ENCODE measurements at regions of chr9 and their contacts with region 1.

Region 1: DNA sequence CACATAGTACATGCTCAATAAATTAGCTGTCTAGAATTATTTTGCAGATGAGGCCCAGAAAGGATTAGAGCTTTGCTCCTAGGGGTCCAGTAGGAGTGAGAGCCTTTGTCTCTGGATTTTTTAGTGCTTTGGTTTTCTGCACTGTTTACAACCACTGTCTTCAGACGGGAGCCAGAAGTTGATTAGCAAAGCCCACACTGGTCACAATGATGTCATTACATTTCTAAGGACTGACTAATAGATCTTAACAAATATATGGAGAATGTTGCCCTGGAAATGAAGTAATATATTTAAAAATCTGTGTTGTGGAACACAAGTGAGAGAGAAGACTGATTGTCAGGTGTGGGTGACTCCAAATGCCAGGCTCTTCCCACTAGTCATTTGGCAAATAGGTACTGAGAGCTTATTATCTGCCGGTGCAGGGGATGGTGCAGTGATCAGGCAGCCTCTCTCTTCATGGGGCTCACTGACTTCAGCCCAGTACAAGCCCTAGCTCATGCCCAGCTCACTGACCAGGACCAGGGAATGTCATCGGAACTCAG is 76.2 kb downstream of the COL15A1 start:
- DNase-seq: peak in 1 of 2 donors; percentile 41
- H3K4me3 ChIP-seq: no peak overlapping the region
- H3K27ac ChIP-seq: peak overlapping the region; percentile 32 to 79 (median 77)
- H3K4me1 ChIP-seq: peaks cover 0 to 17% (median 6%) of the 10 kb centered on the region in 4 donors
- H3K27me3 ChIP-seq: no peaks in the 10 kb centered on the region
- CTCF ChIP-seq: no peak
- EP300 ChIP-seq: no peak
- POLR2A ChIP-seq: no peak

Region 2: GRCh38 chr9:98887918-98888510 is 131.8 kb before region 1 on chr9:
- intact Hi-C with region 1: no loop called
- DNase-seq: no peak
- H3K4me3 ChIP-seq: no peak overlapping the region
- H3K27ac ChIP-seq: peak overlapping the region in 1 of 5 donors; percentile 8
- H3K4me1 ChIP-seq: peaks cover 0 to 8% (median 2%) of the 10 kb centered on the region in 4 donors
- H3K27me3 ChIP-seq: no peaks in the 10 kb centered on the region
- CTCF ChIP-seq: no peak
- EP300 ChIP-seq: no peak
- POLR2A ChIP-seq: no peak

Region 3: DNA sequence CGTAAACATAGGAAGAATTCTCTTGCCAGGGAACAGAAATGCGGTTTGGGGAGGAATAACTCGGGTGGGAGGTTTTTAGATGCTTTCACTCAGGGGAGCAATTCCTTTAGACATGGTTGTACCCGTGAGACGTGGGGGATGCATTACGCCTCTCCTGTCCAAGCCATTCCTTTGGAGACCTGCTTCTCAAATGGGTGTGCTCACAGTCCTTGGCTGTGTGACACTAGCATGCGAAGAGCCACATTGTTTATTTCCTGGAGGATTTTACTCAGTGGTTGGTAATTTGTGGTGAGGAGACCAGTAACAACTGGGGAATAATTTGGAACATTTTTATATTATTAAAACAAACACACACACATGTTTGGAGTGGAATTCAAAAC is 57.7 kb before region 1 on chr9:
- intact Hi-C with region 1: loop called (anchors 10 kb)
- DNase-seq: no peak
- H3K4me3 ChIP-seq: no peak overlapping the region
- H3K27ac ChIP-seq: peak overlapping the region in 4 of 5 donors; percentile 3 to 85 (median 76)
- H3K4me1 ChIP-seq: peaks cover 0 to 77% (median 57%) of the 10 kb centered on the region in 4 donors
- H3K27me3 ChIP-seq: no peaks in the 10 kb centered on the region
- CTCF ChIP-seq: no peak
- EP300 ChIP-seq: no peak
- POLR2A ChIP-seq: no peak